Dorsolateral prefrontal cortex (tissue), 120 donors: ENCODE measurements at regions of chr2 and their contacts with region 1.

Region 1: DNA sequence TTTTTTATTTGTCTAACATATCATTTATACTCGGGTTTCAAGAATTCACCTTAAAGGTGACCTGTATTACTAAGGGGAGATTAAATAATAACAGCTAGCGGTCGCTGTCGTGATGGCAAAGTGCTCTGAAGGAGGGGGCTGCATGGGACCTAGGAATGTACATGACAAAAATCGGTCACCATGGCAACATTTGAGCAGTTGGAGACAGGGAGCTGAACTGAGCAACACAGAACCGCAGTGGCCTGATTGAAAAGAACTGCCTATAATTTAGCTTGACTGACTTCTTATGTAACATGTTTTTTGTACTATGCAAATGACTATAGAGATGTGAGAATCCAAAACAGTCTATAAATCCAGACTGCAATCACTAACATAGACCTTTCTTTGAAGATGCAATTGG is 34.3 kb upstream of the EPHA4 start:
- DNase-seq: peak in 5 of 10 donors; percentile 12 to 56 (median 43)
- H3K4me3 ChIP-seq: no peak overlapping the region
- H3K27ac ChIP-seq: peak overlapping the region in 53 of 59 donors; percentile 9 to 88 (median 69)
- H3K27me3 ChIP-seq: peaks cover 0 to 7% (median 0%) of the 10 kb centered on the region in 45 donors
- CTCF ChIP-seq: no peak

Region 2: DNA sequence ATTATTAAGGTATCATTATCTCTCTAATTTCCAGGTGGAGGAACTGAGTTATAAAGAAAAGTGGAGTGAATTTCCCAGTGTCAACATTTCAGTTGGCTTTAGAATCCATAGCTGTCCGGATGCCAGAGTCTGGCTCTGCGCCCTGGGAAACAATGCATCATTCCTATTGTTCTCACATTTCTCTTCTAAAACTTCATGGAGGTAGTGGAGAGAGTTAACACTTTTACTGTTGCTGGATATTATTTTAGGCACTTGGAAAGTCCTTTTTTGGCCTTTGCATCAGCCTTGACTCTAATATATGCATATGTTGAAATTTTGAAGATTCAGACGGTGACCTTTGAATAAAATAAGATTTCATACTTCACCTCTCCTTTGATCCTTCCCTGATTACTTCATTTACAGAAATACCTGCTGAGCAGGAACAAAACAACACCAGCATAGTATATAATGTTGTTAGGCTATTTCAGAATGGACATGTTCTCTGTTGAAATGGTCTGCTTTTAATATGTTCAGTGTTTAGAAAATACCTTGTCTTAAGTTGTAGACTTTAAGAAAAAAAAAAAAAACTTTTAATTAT is 183.1 kb before region 1 on chr2:
- intact Hi-C with region 1: no loop called
- DNase-seq: no peak
- H3K4me3 ChIP-seq: no peak overlapping the region
- H3K27ac ChIP-seq: no peak overlapping the region
- H3K27me3 ChIP-seq: no peaks in the 10 kb centered on the region
- CTCF ChIP-seq: no peak

Region 3: DNA sequence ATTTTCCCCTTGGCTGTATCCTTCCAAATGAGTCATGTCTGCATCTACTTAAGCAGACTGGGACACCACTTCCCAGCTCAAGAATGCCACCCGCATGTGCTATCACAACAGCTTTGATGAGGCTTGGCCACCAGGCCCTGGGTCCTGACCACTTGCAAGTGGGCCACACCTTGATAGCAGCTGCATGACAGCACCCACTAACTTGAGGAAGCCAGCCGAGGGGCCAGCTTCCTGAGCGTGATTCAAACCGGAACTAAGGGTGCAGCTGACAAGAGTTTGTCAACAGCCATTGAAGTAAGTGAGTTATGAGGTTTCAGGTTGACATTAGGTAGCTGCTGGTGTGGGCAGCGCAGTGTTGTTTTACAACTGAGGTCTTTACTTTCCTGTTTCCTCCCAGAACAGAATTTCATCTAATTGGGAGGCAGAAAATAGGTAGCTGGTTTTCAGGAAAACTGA is 88.7 kb before region 1 on chr2:
- intact Hi-C with region 1: no loop called
- DNase-seq: peak in 2 of 10 donors; percentile 22 to 44
- H3K4me3 ChIP-seq: no peak overlapping the region
- H3K27ac ChIP-seq: peak overlapping the region in 52 of 59 donors; percentile 10 to 92 (median 68)
- H3K27me3 ChIP-seq: no peaks in the 10 kb centered on the region
- CTCF ChIP-seq: no peak

Region 4: GRCh38 chr2:221529943-221530652 is 76.3 kb before region 1 on chr2:
- intact Hi-C with region 1: no loop called
- DNase-seq: no peak
- H3K4me3 ChIP-seq: peak overlapping the region in 18 of 59 donors; percentile 2 to 31 (median 14)
- H3K27ac ChIP-seq: peak overlapping the region in 46 of 59 donors; percentile 2 to 82 (median 54)
- H3K27me3 ChIP-seq: no peaks in the 10 kb centered on the region
- CTCF ChIP-seq: no peak

Region 5: GRCh38 chr2:221896505-221897151 is 290.2 kb after region 1 on chr2:
- intact Hi-C with region 1: loop called (anchors 5 to 10 kb)
- DNase-seq: peak in 5 of 10 donors; percentile 15 to 54 (median 41)
- H3K4me3 ChIP-seq: no peak overlapping the region
- H3K27ac ChIP-seq: peak overlapping the region in 55 of 59 donors; percentile 8 to 90 (median 71)
- H3K27me3 ChIP-seq: no peaks in the 10 kb centered on the region
- CTCF ChIP-seq: no peak